CD4-positive, alpha-beta memory T cell (primary cell): ENCODE measurements at regions of chr17 and their contacts with region 1.

Region 1: DNA sequence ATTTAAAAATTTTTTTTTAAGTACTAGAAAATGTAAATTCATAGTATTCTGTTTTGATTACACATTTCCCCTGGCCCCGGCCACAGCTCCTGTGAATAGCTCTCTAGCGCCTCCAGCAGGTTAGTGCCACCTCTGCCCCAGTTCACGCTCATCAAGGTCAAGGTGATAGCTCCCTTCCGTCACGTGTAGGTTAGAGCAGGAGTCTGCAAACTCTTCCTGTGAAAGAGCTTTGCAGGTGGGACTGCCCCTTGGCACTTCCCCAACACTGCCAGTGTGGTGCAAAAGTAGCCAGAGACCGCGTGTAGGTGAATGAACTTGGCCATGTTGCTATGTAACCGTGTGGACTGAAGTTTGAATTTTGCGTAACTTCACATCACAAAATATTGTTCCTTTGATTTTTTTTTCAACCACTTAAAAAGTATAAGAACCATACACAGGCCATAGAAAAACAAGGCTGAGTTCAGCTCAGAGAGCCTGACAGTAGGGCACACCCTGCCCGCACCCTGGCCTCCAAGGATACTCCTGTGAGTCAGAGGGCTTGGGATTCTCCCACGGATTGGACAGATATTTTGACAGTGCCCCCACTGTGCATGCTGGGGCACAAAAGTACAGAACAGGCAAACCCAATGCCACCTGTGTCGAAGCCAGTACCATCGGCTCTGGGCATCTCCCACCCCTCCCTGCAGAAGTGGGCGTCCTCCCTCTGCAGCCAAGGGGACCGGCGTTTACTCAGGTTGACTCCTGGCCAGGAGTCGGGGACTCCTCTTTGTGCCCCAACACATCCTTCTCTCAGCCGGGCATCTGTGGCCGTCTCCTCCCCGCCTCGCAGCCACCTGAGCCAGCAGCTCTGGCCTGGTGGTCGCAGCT is 92.0 kb upstream of the CHMP6 start:
- DNase-seq: peak; percentile 71 to 83 (median 78)
- H3K4me3 ChIP-seq: no peak overlapping the region
- H3K4me3 Mint-ChIP-seq: no peak overlapping the region
- H3K27ac ChIP-seq: no peak overlapping the region
- H3K27ac Mint-ChIP-seq: peak overlapping the region in 5 of 7 donors; percentile 4 to 57 (median 50)
- H3K4me1 ChIP-seq: peaks cover 17% of the 10 kb centered on the region
- H3K4me1 Mint-ChIP-seq: peaks cover 6 to 47% (median 29%) of the 10 kb centered on the region in 4 donors
- H3K27me3 ChIP-seq: no peaks in the 10 kb centered on the region
- H3K27me3 Mint-ChIP-seq: no peaks in the 10 kb centered on the region

Region 2: DNA sequence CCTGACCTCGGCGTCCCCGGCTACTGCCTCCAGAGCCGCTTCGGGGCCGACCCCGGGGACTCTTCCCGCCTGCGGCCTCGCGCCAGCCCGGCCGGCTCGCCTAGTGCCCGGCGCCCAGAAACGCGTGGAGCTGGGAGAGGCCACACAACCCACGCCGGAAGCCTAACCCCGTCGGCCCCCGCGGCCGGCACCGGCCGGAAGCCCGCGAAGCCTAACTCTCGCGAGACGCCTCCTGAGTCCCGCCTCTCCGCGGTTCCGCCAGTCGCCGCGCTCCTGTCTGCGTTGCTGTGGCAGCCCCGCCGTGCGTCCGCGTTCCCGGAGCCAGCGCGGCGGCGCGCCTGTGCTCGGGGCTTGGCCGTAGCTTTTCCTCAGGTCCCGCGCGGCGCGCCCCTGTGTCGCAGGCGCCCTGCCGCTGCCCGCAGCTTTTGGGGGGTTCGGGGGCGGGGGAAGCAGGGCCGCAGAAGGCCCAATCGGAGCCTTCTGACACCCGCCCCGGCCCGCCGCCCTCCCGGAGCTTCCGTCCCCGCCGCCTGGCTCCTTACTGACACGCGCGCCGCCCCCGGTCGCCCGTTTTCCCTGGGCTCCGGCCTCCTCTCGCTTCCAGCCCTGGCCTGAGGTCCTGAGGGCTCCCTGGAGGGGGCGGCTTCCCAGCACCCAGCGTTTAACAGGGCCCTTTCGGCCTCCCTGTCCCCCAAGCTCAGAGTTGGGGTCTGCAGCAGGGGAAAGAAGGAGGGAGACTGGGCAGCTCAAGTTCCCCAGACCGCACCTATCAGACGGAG is 444.9 kb before region 1 on chr17:
- CTCF ChIA-PET with region 1: interaction called, 3 read pairs
- POLR2A ChIA-PET with region 1: interaction called, 12 read pairs
- intact Hi-C with region 1: no loop called
- DNase-seq: peak; percentile 92 to 96 (median 95)
- H3K4me3 ChIP-seq: peak overlapping the region; percentile 42 to 66
- H3K4me3 Mint-ChIP-seq: peak overlapping the region; percentile 89 to 93 (median 92)
- H3K27ac ChIP-seq: peak overlapping the region; percentile 93
- H3K27ac Mint-ChIP-seq: peak overlapping the region; percentile 92 to 98 (median 96)
- H3K4me1 ChIP-seq: peaks cover 18% of the 10 kb centered on the region
- H3K4me1 Mint-ChIP-seq: peaks cover 9 to 25% (median 12%) of the 10 kb centered on the region in 4 donors
- H3K27me3 ChIP-seq: no peaks in the 10 kb centered on the region
- H3K27me3 Mint-ChIP-seq: peaks cover 14 to 17% of the 10 kb centered on the region in 2 donors

Region 3: DNA sequence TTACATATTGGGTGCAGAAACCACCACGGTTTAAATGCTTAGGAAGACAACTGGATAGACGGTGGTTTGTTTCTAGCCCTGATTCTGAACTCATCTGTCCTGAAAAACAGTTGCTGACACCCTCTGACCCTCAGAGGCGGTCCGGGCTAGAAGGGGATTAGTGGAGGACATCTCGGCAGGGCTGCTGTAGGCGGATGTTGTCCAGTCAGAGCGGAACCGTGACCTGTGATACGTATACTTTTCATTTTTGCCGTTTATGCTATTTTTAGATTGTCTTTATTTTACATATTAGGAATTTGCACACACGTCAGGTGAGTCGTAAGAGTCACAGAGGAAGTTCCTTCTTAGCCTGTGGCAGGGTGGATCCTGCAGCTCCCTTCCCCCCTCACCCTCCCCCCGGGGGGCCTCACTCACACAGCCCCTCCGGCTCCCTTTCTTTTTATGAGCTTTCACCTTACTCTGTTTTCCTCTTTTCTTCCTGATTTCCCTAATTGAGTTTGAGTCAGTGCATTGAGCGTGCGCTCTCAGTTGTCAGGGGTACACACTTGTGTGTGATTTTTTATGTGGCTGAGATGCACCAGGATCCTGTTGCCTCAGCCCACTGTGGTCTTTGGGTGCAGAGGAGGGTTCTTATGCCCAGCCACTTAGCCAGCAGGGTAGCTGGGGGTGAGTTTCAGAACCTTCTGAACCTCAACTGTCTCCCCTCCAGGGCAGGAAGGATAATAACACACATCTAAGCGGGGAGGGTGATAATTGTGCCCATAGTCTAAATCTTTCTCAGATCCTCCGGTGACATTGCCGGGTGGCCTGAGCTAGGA is 119.0 kb before region 1 on chr17:
- CTCF ChIA-PET with region 1: interaction called, 10 read pairs
- POLR2A ChIA-PET with region 1: no interaction called
- intact Hi-C with region 1: no loop called
- DNase-seq: no peak
- H3K4me3 ChIP-seq: peak overlapping the region in 1 of 2 donors; percentile 23
- H3K4me3 Mint-ChIP-seq: peak overlapping the region; percentile 37 to 91 (median 66)
- H3K27ac ChIP-seq: peak overlapping the region; percentile 42
- H3K27ac Mint-ChIP-seq: peak overlapping the region; percentile 70 to 93 (median 78)
- H3K4me1 ChIP-seq: peaks cover 58% of the 10 kb centered on the region
- H3K4me1 Mint-ChIP-seq: peaks cover 37 to 81% (median 67%) of the 10 kb centered on the region in 4 donors
- H3K27me3 ChIP-seq: no peaks in the 10 kb centered on the region
- H3K27me3 Mint-ChIP-seq: no peaks in the 10 kb centered on the region

Region 4: GRCh38 chr17:80866147-80866793 is 33.4 kb before region 1 on chr17:
- CTCF ChIA-PET with region 1: interaction called, 26 read pairs
- POLR2A ChIA-PET with region 1: interaction called, 4 read pairs
- intact Hi-C with region 1: loop called (anchors 1 kb)
- DNase-seq: peak; percentile 43 to 59 (median 51)
- H3K4me3 ChIP-seq: no peak overlapping the region
- H3K4me3 Mint-ChIP-seq: peak overlapping the region in 1 of 8 donors; percentile 1
- H3K27ac ChIP-seq: no peak overlapping the region
- H3K27ac Mint-ChIP-seq: peak overlapping the region in 5 of 7 donors; percentile 5 to 69 (median 25)
- H3K4me1 ChIP-seq: peaks cover 27% of the 10 kb centered on the region
- H3K4me1 Mint-ChIP-seq: peaks cover 27 to 48% (median 38%) of the 10 kb centered on the region in 4 donors
- H3K27me3 ChIP-seq: no peaks in the 10 kb centered on the region
- H3K27me3 Mint-ChIP-seq: no peaks in the 10 kb centered on the region

Region 5: GRCh38 chr17:80917716-80918560 is 18.3 kb after region 1 on chr17:
- CTCF ChIA-PET with region 1: no interaction called
- POLR2A ChIA-PET with region 1: no interaction called
- intact Hi-C with region 1: no loop called
- DNase-seq: no peak
- H3K4me3 ChIP-seq: no peak overlapping the region
- H3K4me3 Mint-ChIP-seq: no peak overlapping the region
- H3K27ac ChIP-seq: no peak overlapping the region
- H3K27ac Mint-ChIP-seq: no peak overlapping the region
- H3K4me1 ChIP-seq: no peaks in the 10 kb centered on the region
- H3K4me1 Mint-ChIP-seq: no peaks in the 10 kb centered on the region
- H3K27me3 ChIP-seq: no peaks in the 10 kb centered on the region
- H3K27me3 Mint-ChIP-seq: no peaks in the 10 kb centered on the region